ENCODE measurements at regions of chr1 and their contacts with region 1.

Region 1: DNA sequence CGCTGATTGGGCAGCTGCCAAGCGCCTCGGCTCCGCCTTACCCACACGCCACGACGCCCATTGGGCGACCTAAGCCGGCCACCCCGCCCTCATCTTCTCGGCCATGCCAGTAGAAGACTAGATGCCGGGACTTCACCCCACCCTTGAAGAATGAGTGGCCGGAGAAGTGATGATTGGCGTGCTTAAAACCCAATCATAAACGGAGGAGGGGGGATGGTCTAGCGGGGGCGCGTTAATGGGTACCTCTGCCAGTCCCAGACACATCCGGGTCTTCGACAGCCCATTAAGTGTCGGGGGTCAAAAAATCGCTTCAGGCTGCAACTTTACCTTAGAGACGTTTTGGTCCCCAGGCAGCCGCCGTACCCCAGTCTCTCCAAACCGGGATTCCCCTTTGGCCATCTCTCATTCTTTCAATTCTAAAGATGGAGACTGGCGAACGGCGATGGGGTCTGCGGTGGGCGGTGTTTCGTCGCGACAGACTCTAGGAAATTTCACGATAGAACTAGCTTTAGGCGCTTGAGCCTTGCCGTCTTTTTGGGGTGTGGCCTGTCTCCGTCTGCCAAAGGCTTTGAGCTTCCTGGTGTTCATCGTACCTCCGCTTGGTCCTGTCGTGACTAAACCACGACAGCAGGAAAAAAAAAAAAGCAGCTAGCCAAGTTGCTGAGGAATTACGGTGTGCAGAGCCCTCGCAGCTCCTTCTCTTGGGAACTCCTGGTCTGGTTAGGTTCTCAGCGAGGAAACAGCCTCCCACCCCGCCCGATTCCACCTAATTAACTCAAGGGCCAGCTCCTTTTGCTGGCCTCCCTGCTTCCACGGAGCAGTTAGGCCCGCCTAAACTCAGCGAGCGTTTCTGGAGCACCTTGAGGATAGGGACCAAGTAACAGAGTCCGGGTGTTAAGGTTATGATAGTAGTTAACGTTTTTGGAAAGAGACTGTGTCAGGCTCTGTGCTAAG is at the start of gene GATAD2B:
- DNase-seq: peak; percentile 99
- H3K4me3 Mint-ChIP-seq: peak within 1 kb of the TSS; percentile 77
- H3K27ac Mint-ChIP-seq: peak within 1 kb of the TSS; percentile 96
- H3K4me1 Mint-ChIP-seq: peaks cover 38% of the 10 kb centered on the region
- H3K27me3 Mint-ChIP-seq: no peaks in the 10 kb centered on the region
- total RNA-seq, gene GATAD2B: 66.4 to 67.9 TPM

Region 2: DNA sequence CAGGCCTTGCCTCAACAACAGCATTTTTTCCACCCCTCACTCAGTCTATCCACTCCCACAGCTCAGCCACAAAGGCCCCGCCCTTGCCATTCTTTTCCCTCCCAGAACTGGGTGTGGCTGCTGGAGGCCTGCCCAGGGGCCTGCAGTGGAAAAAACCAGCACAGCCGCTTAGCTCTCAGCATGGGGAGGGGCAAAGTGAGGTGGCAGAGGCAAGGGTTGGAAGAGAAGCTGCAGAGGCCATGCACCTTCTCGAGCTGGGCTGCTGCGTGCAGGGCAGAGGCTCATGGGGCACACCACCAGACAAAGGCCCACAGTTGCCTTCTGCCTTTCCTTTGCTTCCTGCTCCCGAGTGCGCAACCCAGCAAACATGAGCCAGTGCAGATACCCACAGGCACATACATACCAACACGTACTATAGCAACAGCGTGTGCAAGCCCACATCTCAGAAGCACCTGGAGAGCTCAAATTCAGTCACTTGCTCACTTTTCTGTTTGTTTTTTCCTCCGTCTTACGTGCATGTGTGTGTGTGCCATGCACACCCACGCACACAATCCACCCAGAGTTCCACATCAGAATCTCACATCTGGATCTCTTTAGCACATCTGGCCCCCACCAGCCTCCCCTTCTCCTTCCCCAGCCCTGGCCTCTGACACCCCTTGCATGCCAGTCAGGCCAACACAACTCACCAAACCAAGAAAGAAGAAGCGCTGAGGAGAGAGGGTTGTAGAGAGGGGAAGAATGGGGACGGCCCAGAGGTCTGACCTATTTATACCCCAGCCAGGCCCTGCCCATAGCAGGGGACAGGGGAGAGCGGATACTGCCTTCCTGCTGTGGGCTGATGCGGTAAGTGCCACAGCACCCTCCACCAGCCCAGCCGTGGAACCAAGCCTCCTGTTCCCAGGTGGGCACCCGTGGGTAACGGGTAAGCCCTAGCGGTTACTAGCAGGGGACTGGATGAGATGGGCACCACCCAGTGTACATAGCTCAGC is 377.9 kb before region 1 on chr1 and contains the start of gene S100A4:
- CTCF ChIA-PET with region 1: no interaction called
- POLR2A ChIA-PET with region 1: no interaction called
- intact Hi-C with region 1: loop called (anchors 1 kb)
- DNase-seq: peak; percentile 98
- H3K4me3 Mint-ChIP-seq: peak within 1 kb of the TSS; percentile 92
- H3K27ac Mint-ChIP-seq: peak within 1 kb of the TSS; percentile 99
- H3K4me1 Mint-ChIP-seq: peaks cover 74% of the 10 kb centered on the region
- H3K27me3 Mint-ChIP-seq: no peaks in the 10 kb centered on the region
- total RNA-seq, gene S100A4: 352 to 382 TPM

Region 3: DNA sequence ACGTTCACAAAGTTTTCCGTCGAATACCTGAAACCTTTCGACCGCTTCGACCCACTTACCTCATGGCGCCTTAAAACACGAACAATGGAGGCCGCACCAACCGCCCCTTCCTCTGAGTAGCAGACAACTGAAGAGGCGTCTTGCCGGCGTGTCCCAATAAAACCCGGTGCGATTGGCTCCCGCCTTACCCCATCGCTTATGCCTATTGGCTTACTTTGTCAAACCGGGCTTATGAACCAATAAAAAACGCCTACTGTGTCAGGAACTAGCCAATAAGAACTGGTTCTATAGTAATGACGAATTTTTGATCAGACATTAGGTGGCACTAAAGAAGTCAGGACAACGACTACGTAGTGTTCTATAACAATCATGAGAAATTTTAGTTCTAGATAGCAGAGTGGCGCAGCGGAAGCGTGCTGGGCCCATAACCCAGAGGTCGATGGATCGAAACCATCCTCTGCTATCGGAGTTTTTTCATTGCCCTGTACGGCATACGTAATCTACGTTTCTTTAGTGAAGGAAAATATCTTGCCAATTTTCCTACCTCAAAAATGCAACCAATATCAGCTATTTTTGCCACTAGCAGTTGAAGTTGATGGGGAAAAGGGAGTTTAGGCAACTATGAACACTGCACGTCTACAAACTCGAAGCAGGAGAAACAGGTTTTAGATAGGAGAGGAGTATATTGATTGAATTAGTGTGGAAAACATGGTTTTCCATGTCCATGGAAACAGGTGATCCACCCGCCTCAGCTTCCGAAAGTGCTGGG is 252.2 kb before region 1 on chr1 and contains the start of gene ILF2:
- CTCF ChIA-PET with region 1: no interaction called
- POLR2A ChIA-PET with region 1: no interaction called
- intact Hi-C with region 1: loop called (anchors 2 kb)
- DNase-seq: peak; percentile 99
- H3K4me3 Mint-ChIP-seq: no peak within 1 kb of the TSS
- H3K27ac Mint-ChIP-seq: no peak within 1 kb of the TSS
- H3K4me1 Mint-ChIP-seq: peaks cover 31% of the 10 kb centered on the region
- H3K27me3 Mint-ChIP-seq: no peaks in the 10 kb centered on the region
- total RNA-seq, gene ILF2: 315 to 323 TPM

Region 4: GRCh38 chr1:153796791-153797659 is 126.2 kb before region 1 on chr1:
- CTCF ChIA-PET with region 1: interaction called, 6 read pairs
- POLR2A ChIA-PET with region 1: interaction called, 4 read pairs
- intact Hi-C with region 1: loop called (anchors 2 kb)
- DNase-seq: peak; percentile 89
- H3K4me3 Mint-ChIP-seq: no peak overlapping the region
- H3K27ac Mint-ChIP-seq: no peak overlapping the region
- H3K4me1 Mint-ChIP-seq: peaks cover 3% of the 10 kb centered on the region
- H3K27me3 Mint-ChIP-seq: peaks cover 1% of the 10 kb centered on the region

Region 5: DNA sequence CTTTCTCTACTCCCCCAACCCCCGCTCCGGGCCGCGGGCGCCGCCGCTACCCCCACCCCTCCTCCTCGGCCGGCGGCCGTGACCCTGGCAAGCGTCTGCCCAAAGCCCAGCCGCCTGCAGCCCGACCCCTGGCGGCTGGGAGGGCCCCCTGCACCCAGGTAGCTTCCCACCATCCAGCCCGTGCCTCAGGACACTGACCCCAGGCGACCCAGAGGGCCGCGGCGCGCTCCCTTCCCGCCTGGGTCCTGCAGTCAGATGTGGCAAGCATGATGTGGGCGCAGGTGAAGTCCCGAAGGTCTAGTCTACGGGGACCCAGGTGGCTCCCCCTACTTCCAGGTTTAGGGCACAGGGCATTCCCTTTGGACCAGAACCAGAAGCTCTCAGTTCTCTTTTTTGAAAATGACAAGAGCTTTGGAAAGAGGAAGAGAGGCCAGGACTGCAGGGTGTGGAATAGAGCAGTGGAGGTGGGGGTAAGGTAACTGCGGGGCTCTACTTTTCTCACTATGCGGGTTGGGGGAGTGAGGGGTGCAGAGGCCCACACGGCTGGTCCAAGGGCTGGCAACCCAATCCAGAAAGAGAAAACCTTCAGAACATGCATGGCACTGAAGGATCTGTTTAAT is 23.5 kb after region 1 on chr1 and contains the start of gene DENND4B:
- CTCF ChIA-PET with region 1: interaction called, 20 read pairs
- POLR2A ChIA-PET with region 1: interaction called, 41 read pairs
- intact Hi-C with region 1: loop called (anchors 1 kb)
- DNase-seq: peak; percentile 83
- H3K4me3 Mint-ChIP-seq: peak within 1 kb of the TSS; percentile 92
- H3K27ac Mint-ChIP-seq: peak within 1 kb of the TSS; percentile 97
- H3K4me1 Mint-ChIP-seq: peaks cover 25% of the 10 kb centered on the region
- H3K27me3 Mint-ChIP-seq: no peaks in the 10 kb centered on the region
- total RNA-seq, gene DENND4B: 98.1 to 108 TPM

Region 6: GRCh38 chr1:153967082-153968000 is 44.1 kb after region 1 on chr1 and contains the start of gene CREB3L4:
- CTCF ChIA-PET with region 1: interaction called, 3 read pairs
- POLR2A ChIA-PET with region 1: interaction called, 21 read pairs
- intact Hi-C with region 1: loop called (anchors 2 kb)
- DNase-seq: peak; percentile 92
- H3K4me3 Mint-ChIP-seq: peak within 1 kb of the TSS; percentile 87
- H3K27ac Mint-ChIP-seq: peak within 1 kb of the TSS; percentile 90
- H3K4me1 Mint-ChIP-seq: peaks cover 41% of the 10 kb centered on the region
- H3K27me3 Mint-ChIP-seq: no peaks in the 10 kb centered on the region
- total RNA-seq, gene CREB3L4: 8.5 to 8.7 TPM

Region 7: DNA sequence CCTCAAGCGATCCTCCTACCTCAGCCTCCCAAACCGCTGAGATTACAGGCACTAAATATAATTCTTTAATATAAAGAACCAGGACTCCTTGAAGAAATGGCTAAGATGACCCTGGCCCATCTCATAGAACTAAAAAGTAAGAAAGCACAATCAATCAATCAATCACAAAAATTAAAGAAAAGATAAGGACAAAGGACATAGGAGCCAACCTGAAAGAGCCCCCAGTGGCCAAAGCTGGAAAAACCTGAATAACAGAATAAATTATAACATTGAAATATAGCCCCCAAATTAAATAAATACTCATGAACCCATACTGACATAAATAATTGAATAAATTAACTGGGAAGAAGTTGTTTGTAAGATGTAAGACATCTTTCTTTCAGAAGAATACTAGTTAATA is 222.7 kb after region 1 on chr1:
- CTCF ChIA-PET with region 1: no interaction called
- POLR2A ChIA-PET with region 1: no interaction called
- intact Hi-C with region 1: no loop called
- DNase-seq: no peak
- H3K4me3 Mint-ChIP-seq: no peak overlapping the region
- H3K27ac Mint-ChIP-seq: no peak overlapping the region
- H3K4me1 Mint-ChIP-seq: peaks cover 10% of the 10 kb centered on the region
- H3K27me3 Mint-ChIP-seq: no peaks in the 10 kb centered on the region

Region 8: GRCh38 chr1:154220071-154220969 is 297.1 kb after region 1 on chr1 and contains the start of gene UBAP2L:
- CTCF ChIA-PET with region 1: no interaction called
- POLR2A ChIA-PET with region 1: no interaction called
- intact Hi-C with region 1: loop called (anchors 5 kb)
- DNase-seq: peak; percentile 99
- H3K4me3 Mint-ChIP-seq: peak within 1 kb of the TSS; percentile 90
- H3K27ac Mint-ChIP-seq: peak within 1 kb of the TSS; percentile 94
- H3K4me1 Mint-ChIP-seq: peaks cover 68% of the 10 kb centered on the region
- H3K27me3 Mint-ChIP-seq: peaks cover 2% of the 10 kb centered on the region
- total RNA-seq, gene UBAP2L: 180 to 183 TPM

Measured in activated CD4-positive, alpha-beta memory T cell treated with anti-CD3 and anti-CD28 coated beads for 36 hours (primary cell).